ENCODE measurements at regions of chr12 and their contacts with region 1.

Region 1: DNA sequence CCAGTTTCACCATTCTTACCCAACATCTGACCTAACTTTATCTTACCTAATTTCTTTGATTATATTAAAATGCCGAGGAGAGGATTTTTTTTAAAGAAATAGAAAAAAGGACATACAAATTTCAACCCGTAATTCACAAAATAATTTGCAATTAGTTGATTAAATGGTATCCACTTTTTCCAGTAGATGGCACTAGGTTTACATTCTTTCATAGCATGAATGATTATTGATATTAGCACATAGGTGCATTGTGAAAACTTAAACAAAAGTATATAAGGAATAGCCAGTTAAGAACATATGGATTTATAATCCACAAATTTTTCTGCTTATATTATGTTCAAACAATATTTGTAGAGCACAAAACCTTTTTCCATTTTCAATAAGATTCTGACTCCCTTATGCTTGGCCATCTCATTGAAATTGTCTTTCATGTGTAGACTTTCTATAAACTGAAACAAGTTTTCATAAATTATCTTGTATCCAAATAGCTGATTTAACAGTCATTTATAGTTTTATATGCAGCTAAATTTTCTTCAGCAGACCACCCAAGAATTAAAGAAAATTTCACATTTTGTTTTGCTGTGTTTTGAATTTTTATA is 35.3 kb downstream of the MSRB3 start:
- DNase-seq: peak; percentile 33
- ATAC-seq: peak; percentile 58; the same call in 1 of the 2 replicates
- H3K4me3 ChIP-seq: no peak overlapping the region; a peak in 1 of 4 replicates
- H3K27ac ChIP-seq: peak overlapping the region; percentile 95; the same call in 1 of the 2 replicates
- H3K4me1 ChIP-seq: peaks cover 41 to 91% of the 10 kb centered on the region in 2 experiments
- H3K27me3 ChIP-seq: no peaks in the 10 kb centered on the region
- CTCF ChIP-seq: peak; percentile 45 to 78 (median 73); a peak in 5 of 6 replicates
- POLR2A ChIP-seq: no peak
- RAD21 ChIP-seq: peak; percentile 94

Region 2: GRCh38 chr12:64836862-64837261 is 477.0 kb before region 1 on chr12:
- CTCF ChIA-PET with region 1: no interaction called
- POLR2A ChIA-PET with region 1: no interaction called
- RAD21 ChIA-PET with region 1: no interaction called
- intact Hi-C with region 1: no loop called
- DNase-seq: no peak
- ATAC-seq: no peak
- H3K4me3 ChIP-seq: no peak overlapping the region
- H3K27ac ChIP-seq: no peak overlapping the region
- H3K4me1 ChIP-seq: no peaks in the 10 kb centered on the region
- H3K27me3 ChIP-seq: no peaks in the 10 kb centered on the region
- CTCF ChIP-seq: no peak
- POLR2A ChIP-seq: no peak
- RAD21 ChIP-seq: no peak

Region 3: DNA sequence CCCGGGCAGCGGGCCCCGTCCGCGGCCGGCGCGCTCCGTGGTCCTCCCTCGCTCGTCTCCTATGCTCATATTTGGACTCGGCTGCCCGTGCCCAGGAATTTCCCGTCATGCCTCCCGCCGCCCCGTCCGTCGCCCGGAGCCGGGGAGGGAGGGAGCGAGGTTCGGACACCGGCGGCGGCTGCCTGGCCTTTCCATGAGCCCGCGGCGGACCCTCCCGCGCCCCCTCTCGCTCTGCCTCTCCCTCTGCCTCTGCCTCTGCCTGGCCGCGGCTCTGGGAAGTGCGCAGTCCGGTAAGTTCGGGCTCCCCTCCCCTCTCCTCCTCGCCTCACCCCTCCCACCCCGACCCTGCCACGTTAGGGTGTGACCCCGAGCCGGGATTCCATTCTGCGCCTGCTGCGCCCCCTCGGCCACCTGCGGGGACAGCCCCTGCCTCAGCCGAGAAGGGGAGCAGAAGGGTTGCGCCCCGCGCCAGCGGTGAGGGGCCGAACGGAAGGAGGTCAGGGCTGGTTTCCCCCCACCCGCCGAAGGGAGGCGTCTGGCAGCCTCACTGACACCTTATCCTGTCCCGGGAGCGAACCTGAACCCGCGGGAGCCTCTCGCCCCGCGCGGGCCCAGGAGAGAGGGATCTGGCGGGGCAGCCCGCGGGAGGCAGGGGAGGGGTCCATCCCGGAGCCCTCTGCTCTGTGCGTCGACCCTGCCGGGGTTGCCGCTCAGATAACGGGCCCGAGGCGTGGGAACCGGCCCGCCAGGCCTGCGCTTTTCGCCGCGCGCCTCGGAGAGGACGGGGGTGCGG is 35.0 kb before region 1 on chr12 and contains the start of gene MSRB3:
- CTCF ChIA-PET with region 1: no interaction called
- POLR2A ChIA-PET with region 1: no interaction called
- RAD21 ChIA-PET with region 1: no interaction called
- intact Hi-C with region 1: no loop called
- DNase-seq: peak; percentile 19
- ATAC-seq: peak; percentile 86
- H3K4me3 ChIP-seq: peak within 1 kb of the TSS; percentile 65 to 74
- H3K27ac ChIP-seq: peak within 1 kb of the TSS; percentile 8; the same call in 1 of the 2 replicates
- H3K4me1 ChIP-seq: peaks cover 3 to 8% of the 10 kb centered on the region in 2 experiments; a peak in 2 of 4 replicates
- H3K27me3 ChIP-seq: no peaks in the 10 kb centered on the region
- CTCF ChIP-seq: peak in 1 of 3 experiments; percentile 27; a peak in 2 of 6 replicates
- POLR2A ChIP-seq: no peak
- RAD21 ChIP-seq: no peak
- total RNA-seq, gene MSRB3: 8.2 TPM

Region 4: GRCh38 chr12:65294641-65295262 is 19.1 kb before region 1 on chr12:
- CTCF ChIA-PET with region 1: no interaction called
- POLR2A ChIA-PET with region 1: no interaction called
- RAD21 ChIA-PET with region 1: no interaction called
- intact Hi-C with region 1: no loop called
- DNase-seq: no peak
- ATAC-seq: no peak
- H3K4me3 ChIP-seq: no peak overlapping the region
- H3K27ac ChIP-seq: no peak overlapping the region
- H3K4me1 ChIP-seq: peaks cover 7 to 8% of the 10 kb centered on the region in 2 experiments
- H3K27me3 ChIP-seq: no peaks in the 10 kb centered on the region
- CTCF ChIP-seq: no peak
- POLR2A ChIP-seq: no peak
- RAD21 ChIP-seq: no peak

Region 5: DNA sequence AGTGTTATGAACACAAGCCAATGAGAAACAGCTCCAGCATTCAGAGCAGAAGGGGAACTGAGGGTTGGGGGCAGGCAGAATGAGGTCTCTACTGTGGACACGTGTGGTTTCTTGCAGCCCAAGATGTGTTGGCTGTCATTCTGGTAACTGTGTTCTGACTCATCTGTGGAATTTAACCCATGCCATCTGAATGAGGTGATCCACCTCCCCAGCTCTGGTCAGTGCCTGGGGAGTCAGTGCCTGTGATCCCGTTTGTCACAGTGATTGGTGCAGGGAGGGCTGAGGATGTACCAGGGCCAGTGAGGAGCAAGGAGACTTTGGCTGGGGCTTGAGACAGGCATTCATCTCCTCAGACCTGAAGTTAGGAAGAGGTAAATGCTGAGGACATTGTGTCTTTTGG is 181.4 kb after region 1 on chr12:
- CTCF ChIA-PET with region 1: interaction called, 3 read pairs
- POLR2A ChIA-PET with region 1: no interaction called
- RAD21 ChIA-PET with region 1: no interaction called
- intact Hi-C with region 1: loop called (anchors 5 kb)
- DNase-seq: peak; percentile 88
- ATAC-seq: peak; percentile 86
- H3K4me3 ChIP-seq: no peak overlapping the region
- H3K27ac ChIP-seq: peak overlapping the region; percentile 87
- H3K4me1 ChIP-seq: peaks cover 84 to 86% of the 10 kb centered on the region in 2 experiments
- H3K27me3 ChIP-seq: no peaks in the 10 kb centered on the region
- CTCF ChIP-seq: no peak
- POLR2A ChIP-seq: peak; percentile 35
- RAD21 ChIP-seq: no peak

Region 6: GRCh38 chr12:65673732-65674131 is 359.9 kb after region 1 on chr12:
- CTCF ChIA-PET with region 1: interaction called, 4 read pairs
- POLR2A ChIA-PET with region 1: no interaction called
- RAD21 ChIA-PET with region 1: no interaction called
- intact Hi-C with region 1: loop called (anchors 10 kb)
- DNase-seq: no peak
- ATAC-seq: no peak
- H3K4me3 ChIP-seq: no peak overlapping the region
- H3K27ac ChIP-seq: peak overlapping the region; percentile 13; the same call in 1 of the 2 replicates
- H3K4me1 ChIP-seq: peaks cover 18 to 63% of the 10 kb centered on the region in 2 experiments; a peak in 3 of 4 replicates
- H3K27me3 ChIP-seq: no peaks in the 10 kb centered on the region
- CTCF ChIP-seq: peak in 1 of 3 experiments; percentile 31; a peak in 1 of 6 replicates
- POLR2A ChIP-seq: no peak
- RAD21 ChIP-seq: peak; percentile 68

Region 7: GRCh38 chr12:65720136-65721130 is 406.6 kb after region 1 on chr12:
- CTCF ChIA-PET with region 1: interaction called, 3 read pairs
- POLR2A ChIA-PET with region 1: no interaction called
- RAD21 ChIA-PET with region 1: interaction called in 1 of 2 experiments, 4 read pairs
- intact Hi-C with region 1: loop called (anchors 2 kb)
- DNase-seq: peak; percentile 69
- ATAC-seq: peak; percentile 66
- H3K4me3 ChIP-seq: 0 out of 4 replicates have a peak overlapping the region, but pooled peaks of 1 of the 2 experiments have one; percentile 11
- H3K27ac ChIP-seq: peak overlapping the region; percentile 98
- H3K4me1 ChIP-seq: peaks cover 58 to 74% of the 10 kb centered on the region in 2 experiments
- H3K27me3 ChIP-seq: no peaks in the 10 kb centered on the region
- CTCF ChIP-seq: no peak
- POLR2A ChIP-seq: no peak
- RAD21 ChIP-seq: no peak; the same call in 1 of the 2 replicates

Region 8: GRCh38 chr12:65728848-65729793 is 415.3 kb after region 1 on chr12:
- CTCF ChIA-PET with region 1: no interaction called
- POLR2A ChIA-PET with region 1: no interaction called
- RAD21 ChIA-PET with region 1: no interaction called
- intact Hi-C with region 1: loop called (anchors 2 kb)
- DNase-seq: peak; percentile 59
- ATAC-seq: peak; percentile 71
- H3K4me3 ChIP-seq: peak overlapping the region; percentile 57 to 69
- H3K27ac ChIP-seq: peak overlapping the region; percentile 98
- H3K4me1 ChIP-seq: peaks cover 47 to 62% of the 10 kb centered on the region in 2 experiments
- H3K27me3 ChIP-seq: no peaks in the 10 kb centered on the region
- CTCF ChIP-seq: no peak
- POLR2A ChIP-seq: no peak
- RAD21 ChIP-seq: no peak